CD4-positive, alpha-beta T cell (primary cell): ENCODE measurements at regions of chr15 and their contacts with region 1.

Region 1: GRCh38 chr15:63402498-63403253 is 21.0 kb upstream of the CA12 start:
- DNase-seq: peak in 3 of 14 experiments; percentile 57 to 58 (median 57)
- ATAC-seq: peak; percentile 62
- H3K4me3 ChIP-seq: no peak overlapping the region
- H3K4me3 Mint-ChIP-seq: no peak overlapping the region
- H3K27ac ChIP-seq: no peak overlapping the region
- H3K27ac Mint-ChIP-seq: no peak overlapping the region
- H3K4me1 ChIP-seq: no peaks in the 10 kb centered on the region
- H3K4me1 Mint-ChIP-seq: no peaks in the 10 kb centered on the region
- H3K27me3 ChIP-seq: peaks cover 0 to 3% of the 10 kb centered on the region in 2 experiments
- H3K27me3 Mint-ChIP-seq: no peaks in the 10 kb centered on the region
- CTCF ChIP-seq: peak; percentile 63

Region 2: GRCh38 chr15:62904041-62904910 is 498.4 kb before region 1 on chr15:
- CTCF ChIA-PET with region 1: no interaction called
- POLR2A ChIA-PET with region 1: no interaction called
- intact Hi-C with region 1: loop called in 1 of 2 experiments (anchors 2 kb)
- DNase-seq: peak in 3 of 14 experiments; percentile 2 to 16 (median 13)
- ATAC-seq: no peak
- H3K4me3 ChIP-seq: no peak overlapping the region
- H3K4me3 Mint-ChIP-seq: no peak overlapping the region
- H3K27ac ChIP-seq: no peak overlapping the region
- H3K27ac Mint-ChIP-seq: no peak overlapping the region
- H3K4me1 ChIP-seq: no peaks in the 10 kb centered on the region
- H3K4me1 Mint-ChIP-seq: no peaks in the 10 kb centered on the region
- H3K27me3 ChIP-seq: no peaks in the 10 kb centered on the region
- H3K27me3 Mint-ChIP-seq: no peaks in the 10 kb centered on the region
- CTCF ChIP-seq: peak; percentile 69

Region 3: GRCh38 chr15:63166219-63166618 is 236.5 kb before region 1 on chr15:
- CTCF ChIA-PET with region 1: no interaction called
- POLR2A ChIA-PET with region 1: interaction called, 3 read pairs
- intact Hi-C with region 1: loop called in 1 of 2 experiments (anchors 5 kb)
- DNase-seq: peak in 3 of 14 experiments; percentile 44 to 54 (median 46)
- ATAC-seq: peak; percentile 37
- H3K4me3 ChIP-seq: no peak overlapping the region
- H3K4me3 Mint-ChIP-seq: no peak overlapping the region
- H3K27ac ChIP-seq: no peak overlapping the region
- H3K27ac Mint-ChIP-seq: no peak overlapping the region
- H3K4me1 ChIP-seq: no peaks in the 10 kb centered on the region
- H3K4me1 Mint-ChIP-seq: peaks cover 5% of the 10 kb centered on the region
- H3K27me3 ChIP-seq: no peaks in the 10 kb centered on the region
- H3K27me3 Mint-ChIP-seq: no peaks in the 10 kb centered on the region
- CTCF ChIP-seq: peak; percentile 38

Region 4: DNA sequence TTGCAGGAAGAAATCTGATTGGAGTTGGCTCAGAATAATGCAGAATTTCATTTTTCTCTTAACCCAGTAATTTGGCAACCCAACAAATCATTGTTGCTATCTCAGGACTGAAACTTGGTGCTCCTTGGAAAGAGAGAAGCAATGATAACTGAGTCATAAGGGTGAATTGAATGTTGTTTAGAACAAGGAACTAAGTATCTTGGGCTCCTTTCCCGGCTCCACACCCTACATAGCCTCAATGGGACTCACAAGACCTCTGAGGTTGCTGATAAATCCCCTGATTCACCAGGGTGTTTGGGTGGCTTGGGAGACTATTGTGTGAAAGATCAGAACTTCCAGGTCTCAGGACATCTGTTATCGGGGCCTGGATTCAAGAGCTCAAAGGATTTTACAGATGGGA is 221.0 kb before region 1 on chr15:
- CTCF ChIA-PET with region 1: no interaction called
- POLR2A ChIA-PET with region 1: interaction called, 3 read pairs
- intact Hi-C with region 1: loop called (anchors 5 kb)
- DNase-seq: no peak
- ATAC-seq: no peak
- H3K4me3 ChIP-seq: no peak overlapping the region
- H3K4me3 Mint-ChIP-seq: no peak overlapping the region
- H3K27ac ChIP-seq: no peak overlapping the region
- H3K27ac Mint-ChIP-seq: no peak overlapping the region
- H3K4me1 ChIP-seq: no peaks in the 10 kb centered on the region
- H3K4me1 Mint-ChIP-seq: no peaks in the 10 kb centered on the region
- H3K27me3 ChIP-seq: no peaks in the 10 kb centered on the region
- H3K27me3 Mint-ChIP-seq: no peaks in the 10 kb centered on the region
- CTCF ChIP-seq: no peak

Region 5: GRCh38 chr15:63288778-63289378 is 113.8 kb before region 1 on chr15:
- CTCF ChIA-PET with region 1: interaction called, 4 read pairs
- POLR2A ChIA-PET with region 1: no interaction called
- intact Hi-C with region 1: loop called (anchors 1 to 2 kb)
- DNase-seq: peak in 3 of 14 experiments; percentile 67 to 70 (median 69)
- ATAC-seq: peak; percentile 88
- H3K4me3 ChIP-seq: no peak overlapping the region
- H3K4me3 Mint-ChIP-seq: no peak overlapping the region
- H3K27ac ChIP-seq: no peak overlapping the region
- H3K27ac Mint-ChIP-seq: no peak overlapping the region
- H3K4me1 ChIP-seq: no peaks in the 10 kb centered on the region
- H3K4me1 Mint-ChIP-seq: peaks cover 9% of the 10 kb centered on the region
- H3K27me3 ChIP-seq: no peaks in the 10 kb centered on the region
- H3K27me3 Mint-ChIP-seq: no peaks in the 10 kb centered on the region
- CTCF ChIP-seq: peak; percentile 73

Region 6: DNA sequence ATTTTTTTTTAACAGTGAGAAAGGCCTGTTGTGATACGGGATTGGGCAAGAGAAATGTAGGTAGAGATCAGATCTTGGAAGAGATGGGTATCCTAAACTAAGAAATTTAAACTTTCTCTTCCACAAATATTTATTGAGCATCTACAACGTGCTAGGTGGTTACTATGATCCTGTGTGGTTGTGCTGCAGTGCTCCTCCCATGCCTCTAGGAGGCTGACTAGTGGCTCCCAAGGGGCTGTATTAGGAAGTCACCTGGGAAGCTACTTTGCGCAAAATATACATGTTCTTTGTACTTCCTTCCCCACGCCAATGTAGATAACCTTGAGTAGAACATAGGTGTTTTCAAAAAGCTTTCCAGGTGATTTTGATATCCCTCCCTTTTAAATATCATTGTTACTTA is 128.9 kb after region 1 on chr15:
- CTCF ChIA-PET with region 1: no interaction called
- POLR2A ChIA-PET with region 1: no interaction called
- intact Hi-C with region 1: no loop called
- DNase-seq: peak in 2 of 14 experiments; percentile 28 to 38
- ATAC-seq: peak; percentile 51
- H3K4me3 ChIP-seq: no peak overlapping the region
- H3K4me3 Mint-ChIP-seq: peak overlapping the region; percentile 2
- H3K27ac ChIP-seq: no peak overlapping the region
- H3K27ac Mint-ChIP-seq: no peak overlapping the region
- H3K4me1 ChIP-seq: peaks cover 35% of the 10 kb centered on the region
- H3K4me1 Mint-ChIP-seq: peaks cover 92% of the 10 kb centered on the region
- H3K27me3 ChIP-seq: no peaks in the 10 kb centered on the region
- H3K27me3 Mint-ChIP-seq: no peaks in the 10 kb centered on the region
- CTCF ChIP-seq: peak; percentile 21